Transverse colon (tissue), 4 donors: ENCODE measurements at regions of chr12 and their contacts with region 1.

Region 1: DNA sequence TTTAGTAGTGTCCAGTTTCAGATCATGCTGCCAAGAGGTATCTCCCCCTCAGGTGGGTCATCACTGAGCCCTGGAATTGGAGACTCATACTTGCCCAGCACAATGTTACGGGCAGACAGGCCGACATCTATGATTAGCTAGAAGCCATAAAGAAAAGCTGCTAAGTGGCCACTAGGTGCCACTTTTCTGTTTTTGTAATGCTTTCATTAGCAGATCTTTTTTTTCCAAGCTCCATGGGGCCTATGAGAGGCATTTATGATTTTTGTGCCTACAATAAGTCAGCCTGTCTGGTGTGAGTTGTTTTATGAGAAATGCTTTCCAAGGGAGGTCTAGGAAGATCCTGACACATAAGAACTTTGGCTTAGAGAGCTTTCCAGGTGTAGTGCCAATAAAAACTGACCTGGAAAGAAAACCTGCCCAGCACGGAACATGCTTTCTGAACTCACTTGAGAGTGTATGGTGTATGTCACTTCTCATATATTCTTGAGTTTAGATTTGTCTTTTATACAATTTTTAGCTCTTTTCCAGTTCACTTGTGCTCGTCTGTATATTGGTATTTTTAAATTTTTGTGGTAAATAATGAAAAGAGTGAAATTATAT is 21.8 kb upstream of the SMCO2 start:
- DNase-seq: no peak
- H3K4me3 ChIP-seq: no peak overlapping the region
- H3K27ac ChIP-seq: no peak overlapping the region
- H3K4me1 ChIP-seq: peaks cover 0 to 6% (median 0%) of the 10 kb centered on the region in 4 donors
- H3K27me3 ChIP-seq: no peaks in the 10 kb centered on the region
- CTCF ChIP-seq: peak; percentile 32 to 66 (median 49)
- EP300 ChIP-seq: no peak
- POLR2A ChIP-seq: no peak

Region 2: DNA sequence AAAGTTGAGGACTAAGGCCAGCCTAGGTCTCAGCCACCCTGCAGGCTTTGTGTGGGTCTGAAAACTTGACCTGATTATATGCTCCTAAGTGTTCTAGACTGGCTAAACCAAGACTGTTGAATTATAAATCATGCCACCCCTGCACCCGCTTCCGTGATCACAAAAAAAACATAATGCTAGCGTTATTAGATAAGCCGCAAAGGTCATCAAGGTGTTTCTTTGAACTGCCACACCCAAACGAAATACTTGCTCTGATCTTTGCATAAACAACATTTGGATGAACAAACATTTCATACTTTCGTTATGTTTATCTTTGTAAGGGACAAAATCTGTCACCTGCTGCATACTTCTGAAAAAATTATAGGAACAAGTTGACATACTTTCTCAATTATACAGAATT is 24.3 kb after region 1 on chr12:
- in situ Hi-C with region 1: no loop called
- intact Hi-C with region 1: loop called (anchors 1 kb)
- DNase-seq: no peak
- H3K4me3 ChIP-seq: no peak overlapping the region
- H3K27ac ChIP-seq: no peak overlapping the region
- H3K4me1 ChIP-seq: no peaks in the 10 kb centered on the region
- H3K27me3 ChIP-seq: no peaks in the 10 kb centered on the region
- CTCF ChIP-seq: no peak
- EP300 ChIP-seq: no peak
- POLR2A ChIP-seq: no peak

Region 3: DNA sequence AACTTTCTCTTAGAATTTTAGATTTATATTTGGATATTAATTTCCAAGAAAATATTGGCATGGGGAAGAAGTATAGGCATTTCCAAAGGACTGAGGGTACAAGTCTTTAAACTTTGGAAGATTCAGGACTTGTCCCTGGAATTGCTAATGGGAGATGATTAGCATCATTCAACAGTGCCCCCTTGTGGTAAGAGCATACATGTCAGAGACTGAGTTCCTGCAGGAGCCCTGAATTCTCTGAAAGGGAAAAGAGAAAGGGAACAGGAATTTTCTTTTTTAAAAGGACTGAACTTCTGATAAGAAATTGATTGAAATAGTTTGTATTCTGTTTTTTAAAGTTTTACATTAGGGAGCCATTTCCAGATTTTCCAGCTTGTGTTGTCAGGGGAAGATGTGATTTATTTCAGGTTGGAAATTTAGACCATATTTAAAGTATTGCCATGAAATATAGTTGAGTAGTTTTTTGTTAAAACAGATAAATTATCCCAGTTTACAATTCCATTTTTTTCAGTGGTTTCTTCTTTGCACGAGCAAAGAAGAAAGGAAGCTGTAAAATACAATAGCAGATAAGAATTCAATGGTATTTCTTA is 227.5 kb after region 1 on chr12:
- in situ Hi-C with region 1: loop called in 1 of 4 experiments (anchors 25 kb)
- intact Hi-C with region 1: no loop called
- DNase-seq: peak; percentile 27
- H3K4me3 ChIP-seq: no peak overlapping the region
- H3K27ac ChIP-seq: no peak overlapping the region
- H3K4me1 ChIP-seq: no peaks in the 10 kb centered on the region
- H3K27me3 ChIP-seq: no peaks in the 10 kb centered on the region
- CTCF ChIP-seq: peak; percentile 75 to 86 (median 83)
- EP300 ChIP-seq: no peak
- POLR2A ChIP-seq: no peak